AG04450 (cell line): ENCODE measurements at regions of chr11 and their contacts with region 1.

Region 1: GRCh38 chr11:8263769-8264410 is at the start of gene LMO1:
- DNase-seq: peak; percentile 13
- H3K4me3 ChIP-seq: peak within 1 kb of the TSS; percentile 41
- H3K27ac ChIP-seq: no peak within 1 kb of the TSS
- H3K27me3 ChIP-seq: peaks cover 83% of the 10 kb centered on the region
- CTCF ChIP-seq: peak; percentile 88
- polyA plus RNA-seq, gene LMO1: not detected in 2 replicates

Region 2: DNA sequence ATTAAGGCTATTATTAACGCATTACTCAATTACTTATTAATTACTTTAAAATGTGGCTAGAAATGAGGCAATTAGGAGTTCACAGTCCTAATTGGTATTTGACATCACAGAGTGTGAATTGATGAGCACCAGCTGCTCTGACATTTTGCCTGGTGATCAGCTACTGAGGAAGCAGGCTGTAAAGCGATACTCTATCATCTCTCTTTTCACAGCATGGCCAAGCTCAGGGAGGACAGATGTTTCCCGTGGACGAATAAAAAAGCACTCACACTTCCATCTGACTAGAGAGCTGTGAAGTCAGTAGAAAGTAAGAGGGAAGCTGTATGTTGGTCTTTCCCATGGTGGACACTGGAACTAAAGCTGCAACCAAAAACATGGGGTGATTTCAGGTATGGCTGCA is 1041.3 kb before region 1 on chr11:
- CTCF ChIA-PET with region 1: no interaction called
- POLR2A ChIA-PET with region 1: no interaction called
- DNase-seq: no peak
- H3K4me3 ChIP-seq: no peak overlapping the region
- H3K27ac ChIP-seq: no peak overlapping the region
- H3K27me3 ChIP-seq: no peaks in the 10 kb centered on the region
- CTCF ChIP-seq: no peak

Region 3: GRCh38 chr11:8070417-8071115 is 193.3 kb before region 1 on chr11:
- CTCF ChIA-PET with region 1: no interaction called
- POLR2A ChIA-PET with region 1: no interaction called
- DNase-seq: no peak
- H3K4me3 ChIP-seq: no peak overlapping the region
- H3K27ac ChIP-seq: no peak overlapping the region
- H3K27me3 ChIP-seq: peaks cover 2% of the 10 kb centered on the region
- CTCF ChIP-seq: peak; percentile 53

Region 4: GRCh38 chr11:8225589-8226036 is 38.3 kb before region 1 on chr11:
- CTCF ChIA-PET with region 1: interaction called, 15 read pairs
- POLR2A ChIA-PET with region 1: no interaction called
- DNase-seq: peak; percentile 29
- H3K4me3 ChIP-seq: no peak overlapping the region
- H3K27ac ChIP-seq: no peak overlapping the region
- H3K27me3 ChIP-seq: peaks cover 12% of the 10 kb centered on the region
- CTCF ChIP-seq: peak; percentile 87

Region 5: DNA sequence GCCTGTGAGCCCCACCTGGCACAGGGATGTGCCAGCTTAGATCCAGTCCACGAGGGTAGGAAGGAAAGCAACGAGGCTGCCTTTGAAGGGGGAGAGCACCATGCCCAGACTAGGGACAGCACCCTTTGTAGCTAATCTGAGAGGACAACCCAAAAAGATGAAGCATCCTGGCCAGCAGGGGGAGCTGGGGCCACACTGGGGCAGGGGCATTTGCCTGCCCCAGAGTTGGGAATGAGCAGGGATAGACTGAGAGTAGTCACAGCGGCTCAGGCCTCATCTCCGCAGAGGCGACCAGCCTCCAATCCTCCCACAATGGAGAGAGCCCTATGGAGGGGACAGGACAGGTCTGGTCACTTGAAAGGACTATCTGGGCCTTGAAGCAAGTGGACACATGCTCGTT is 16.6 kb before region 1 on chr11:
- CTCF ChIA-PET with region 1: interaction called, 15 read pairs
- POLR2A ChIA-PET with region 1: no interaction called
- DNase-seq: no peak
- H3K4me3 ChIP-seq: no peak overlapping the region
- H3K27ac ChIP-seq: no peak overlapping the region
- H3K27me3 ChIP-seq: peaks cover 19% of the 10 kb centered on the region
- CTCF ChIP-seq: peak; percentile 41

Region 6: DNA sequence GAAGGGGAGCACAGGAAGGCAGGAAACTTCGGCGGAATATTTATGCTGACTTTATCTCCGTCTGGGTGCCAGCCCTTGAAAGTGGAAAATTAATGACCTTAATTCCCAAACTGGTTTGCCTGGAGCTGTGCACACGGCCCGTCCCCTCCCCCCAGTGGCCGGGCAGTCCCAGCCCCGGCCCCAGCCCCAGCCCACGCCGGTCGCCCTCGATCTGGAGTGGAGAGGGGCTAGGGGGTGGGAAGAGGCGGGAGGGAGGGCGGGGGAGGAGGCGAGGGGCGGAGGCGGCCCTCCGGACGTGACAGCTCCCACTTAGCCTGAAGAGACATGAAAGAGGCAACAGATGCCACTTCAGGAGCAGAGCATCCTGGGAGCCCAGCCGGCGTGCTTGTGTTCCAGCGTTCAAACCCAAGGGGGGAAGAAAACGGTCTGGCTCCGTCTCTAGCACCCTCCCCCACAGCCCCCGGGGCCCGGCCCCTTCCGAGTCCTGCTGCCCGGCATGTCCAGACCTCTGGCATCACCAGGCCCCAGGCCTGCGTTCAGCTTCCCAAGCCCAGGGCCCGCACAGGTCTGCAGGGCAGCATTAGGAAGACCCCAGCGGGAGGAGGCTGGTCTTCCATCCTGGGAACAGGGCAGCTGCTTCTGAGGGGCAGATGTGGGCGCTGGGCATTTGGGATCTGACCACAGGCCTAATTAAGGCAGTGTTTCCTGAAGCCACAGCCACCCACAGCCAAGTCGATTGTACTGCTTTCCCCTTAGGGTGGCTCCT is 19.8 kb after region 1 on chr11:
- CTCF ChIA-PET with region 1: interaction called, 23 read pairs
- POLR2A ChIA-PET with region 1: no interaction called
- DNase-seq: no peak
- H3K4me3 ChIP-seq: no peak overlapping the region
- H3K27ac ChIP-seq: no peak overlapping the region
- H3K27me3 ChIP-seq: peaks cover 12% of the 10 kb centered on the region
- CTCF ChIP-seq: no peak